ENCODE measurements at regions of chr2 and their contacts with region 1.

Region 1: GRCh38 chr2:19347619-19348562 is 10.5 kb downstream of the OSR1 start:
- DNase-seq: peak; percentile 81 to 93
- H3K4me3 ChIP-seq: peak overlapping the region; percentile 68
- H3K4me1 ChIP-seq: no peaks in the 10 kb centered on the region; the same call in 1 of the 2 replicates
- H3K27me3 ChIP-seq: no peaks in the 10 kb centered on the region

Region 2: GRCh38 chr2:18536100-18536499 is 811.8 kb before region 1 on chr2:
- in situ Hi-C with region 1: loop called (anchors 10 kb)
- DNase-seq: no peak
- H3K4me3 ChIP-seq: no peak overlapping the region
- H3K4me1 ChIP-seq: no peaks in the 10 kb centered on the region
- H3K27me3 ChIP-seq: no peaks in the 10 kb centered on the region

Region 3: DNA sequence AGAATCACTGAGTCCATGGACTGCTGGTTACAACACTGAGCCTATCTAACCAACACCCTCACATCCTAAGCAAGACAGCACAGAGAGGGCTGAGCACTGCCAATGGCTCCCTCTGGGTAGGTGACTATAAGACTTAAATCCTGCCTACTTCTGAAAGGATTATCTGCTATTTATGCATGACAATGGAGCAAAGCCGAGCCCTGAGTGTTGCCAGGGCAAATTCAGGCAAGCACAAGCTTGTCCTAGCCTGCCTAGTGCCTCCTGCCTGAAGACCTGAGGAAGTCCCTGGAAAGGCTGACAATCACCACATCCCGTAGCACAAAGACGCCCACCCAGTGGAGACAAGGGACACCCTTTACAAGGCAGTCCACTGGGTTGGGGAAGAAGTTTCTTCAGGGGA is 119.2 kb before region 1 on chr2:
- in situ Hi-C with region 1: loop called (anchors 5 kb)
- DNase-seq: peak; percentile 86 to 93
- H3K4me3 ChIP-seq: no peak overlapping the region
- H3K4me1 ChIP-seq: peaks cover 22% of the 10 kb centered on the region
- H3K27me3 ChIP-seq: no peaks in the 10 kb centered on the region

Region 4: GRCh38 chr2:19911799-19912509 is 564.1 kb after region 1 on chr2:
- in situ Hi-C with region 1: no loop called
- DNase-seq: no peak
- H3K4me3 ChIP-seq: no peak overlapping the region
- H3K4me1 ChIP-seq: no peaks in the 10 kb centered on the region
- H3K27me3 ChIP-seq: no peaks in the 10 kb centered on the region